ENCODE measurements at regions of chr15 and their contacts with region 1.

Region 1: GRCh38 chr15:37079726-37080125 is 20.6 kb downstream of the MEIS2 start:
- DNase-seq: no peak
- ATAC-seq: no peak
- H3K4me3 ChIP-seq: no peak overlapping the region
- H3K27ac ChIP-seq: no peak overlapping the region
- H3K4me1 ChIP-seq: peaks cover 35% of the 10 kb centered on the region
- H3K27me3 ChIP-seq: no peaks in the 10 kb centered on the region
- CTCF ChIP-seq: no peak

Region 2: GRCh38 chr15:37059086-37059485 is 20.6 kb before region 1 on chr15:
- CTCF ChIA-PET with region 1: no interaction called
- POLR2A ChIA-PET with region 1: no interaction called
- intact Hi-C with region 1: loop called (anchors 2 kb)
- DNase-seq: peak; percentile 92
- ATAC-seq: peak; percentile 84
- H3K4me3 ChIP-seq: no peak overlapping the region
- H3K27ac ChIP-seq: peak overlapping the region; percentile 73
- H3K4me1 ChIP-seq: peaks cover 28% of the 10 kb centered on the region
- H3K27me3 ChIP-seq: no peaks in the 10 kb centered on the region
- CTCF ChIP-seq: no peak

Region 3: DNA sequence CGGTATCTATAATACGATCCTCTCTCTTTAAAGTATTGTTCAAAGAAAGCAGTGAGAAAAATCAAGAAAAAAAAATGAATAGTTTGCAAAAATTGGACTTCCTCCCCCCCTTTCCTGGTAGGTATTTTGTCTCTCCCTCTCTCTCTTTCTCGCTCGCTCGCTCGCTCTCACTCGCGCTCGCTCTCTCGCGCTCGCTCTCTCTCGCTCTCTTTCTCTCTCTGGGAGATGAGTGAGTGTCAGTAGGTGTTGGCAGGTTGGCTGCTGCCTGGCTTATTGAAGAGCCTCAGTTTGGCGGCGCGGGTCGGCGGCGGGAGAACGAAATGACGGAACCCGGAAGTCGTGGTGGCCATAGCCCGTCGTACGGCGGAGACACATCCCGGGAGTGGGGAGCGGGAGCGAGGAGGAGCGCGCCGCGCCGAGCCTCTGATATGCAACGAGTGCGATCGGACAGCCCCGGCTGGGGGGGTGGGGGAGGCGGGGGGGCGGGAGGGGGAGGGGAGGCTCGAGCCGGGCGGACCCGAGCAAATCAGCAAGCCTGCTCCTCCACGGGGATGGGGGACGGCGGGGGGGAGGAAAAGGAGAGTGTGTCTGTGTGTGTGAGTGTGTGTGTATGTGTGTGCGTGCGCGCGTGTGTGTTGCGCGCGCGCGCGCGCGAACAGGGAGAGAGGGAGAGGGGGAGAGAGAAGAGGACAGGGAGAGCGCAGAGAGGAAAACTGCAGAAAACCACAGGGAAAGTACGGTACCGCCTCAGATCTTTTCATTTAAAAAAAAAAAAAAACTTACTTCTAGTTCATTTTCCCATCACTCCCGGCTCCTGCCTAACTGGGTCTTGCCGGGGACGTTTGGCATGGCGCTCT is 20.6 kb after region 1 on chr15 and contains the start of gene MEIS2:
- CTCF ChIA-PET with region 1: no interaction called
- POLR2A ChIA-PET with region 1: no interaction called
- intact Hi-C with region 1: loop called (anchors 1 kb)
- DNase-seq: peak; percentile 85
- ATAC-seq: peak; percentile 41
- H3K4me3 ChIP-seq: peak within 1 kb of the TSS; percentile 93
- H3K27ac ChIP-seq: peak within 1 kb of the TSS; percentile 87
- H3K4me1 ChIP-seq: peaks cover 24% of the 10 kb centered on the region; the same call in 1 of the 2 replicates
- H3K27me3 ChIP-seq: no peaks in the 10 kb centered on the region
- CTCF ChIP-seq: no peak
- total RNA-seq, gene MEIS2: 10.0 and 17.5 TPM in 2 replicates

Region 4: GRCh38 chr15:37125143-37125542 is 45.4 kb after region 1 on chr15:
- CTCF ChIA-PET with region 1: no interaction called
- POLR2A ChIA-PET with region 1: no interaction called
- intact Hi-C with region 1: no loop called
- DNase-seq: peak; percentile 29
- ATAC-seq: peak; percentile 29; the same call in 1 of the 2 replicates
- H3K4me3 ChIP-seq: no peak overlapping the region
- H3K27ac ChIP-seq: no peak overlapping the region
- H3K4me1 ChIP-seq: no peaks in the 10 kb centered on the region
- H3K27me3 ChIP-seq: no peaks in the 10 kb centered on the region
- CTCF ChIP-seq: no peak